PC-9 (cell line): ENCODE measurements at regions of chr12 and their contacts with region 1.

Region 1: DNA sequence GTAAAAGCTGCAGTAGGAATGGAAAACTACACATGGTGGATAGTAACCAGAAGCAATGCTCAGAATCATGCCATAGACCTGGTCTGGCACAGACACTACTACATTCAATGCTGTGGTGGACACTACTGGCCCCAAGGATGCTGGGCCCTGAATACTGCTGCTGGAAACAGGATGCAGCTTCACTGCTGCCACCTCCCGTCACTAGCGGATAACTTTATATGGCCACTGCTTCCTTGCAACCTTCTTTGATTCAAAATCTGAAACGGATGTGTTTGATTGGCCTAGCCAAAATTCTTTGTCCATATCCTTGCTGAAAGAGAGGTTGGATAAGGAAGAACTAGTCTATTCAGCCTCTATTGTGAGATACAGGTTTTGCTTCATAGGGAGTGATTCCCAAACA is 30.7 kb downstream of the ADCY6 start:
- DNase-seq: no peak
- H3K4me3 ChIP-seq: no peak overlapping the region
- H3K27ac ChIP-seq: no peak overlapping the region
- H3K4me1 ChIP-seq: no peaks in the 10 kb centered on the region; the same call in 1 of the 2 replicates
- H3K27me3 ChIP-seq: no peaks in the 10 kb centered on the region
- CTCF ChIP-seq: no peak

Region 2: GRCh38 chr12:48788854-48789796 is 30.9 kb after region 1 on chr12 and contains the start of gene ADCY6:
- CTCF ChIA-PET with region 1: interaction called, 35 read pairs
- POLR2A ChIA-PET with region 1: interaction called, 3 read pairs
- intact Hi-C with region 1: no loop called
- DNase-seq: peak; percentile 61 to 77
- H3K4me3 ChIP-seq: peak within 1 kb of the TSS; percentile 89
- H3K27ac ChIP-seq: 0 out of 2 replicates have a peak within 1 kb of the TSS, but pooled peaks have one; percentile 43
- H3K4me1 ChIP-seq: peaks cover 33% of the 10 kb centered on the region
- H3K27me3 ChIP-seq: no peaks in the 10 kb centered on the region
- CTCF ChIP-seq: no peak
- total RNA-seq, gene ADCY6: 48.3 and 61.9 TPM in 2 replicates

Region 3: GRCh38 chr12:48795480-48796455 is 37.5 kb after region 1 on chr12:
- CTCF ChIA-PET with region 1: interaction called, 35 read pairs
- POLR2A ChIA-PET with region 1: no interaction called
- intact Hi-C with region 1: loop called (anchors 1 kb)
- DNase-seq: peak; percentile 57 to 67
- H3K4me3 ChIP-seq: no peak overlapping the region
- H3K27ac ChIP-seq: peak overlapping the region; percentile 78
- H3K4me1 ChIP-seq: peaks cover 21% of the 10 kb centered on the region
- H3K27me3 ChIP-seq: no peaks in the 10 kb centered on the region
- CTCF ChIP-seq: peak; percentile 99

Region 4: GRCh38 chr12:48803675-48804074 is 45.5 kb after region 1 on chr12:
- CTCF ChIA-PET with region 1: interaction called, 13 read pairs
- POLR2A ChIA-PET with region 1: no interaction called
- intact Hi-C with region 1: no loop called
- DNase-seq: no peak
- H3K4me3 ChIP-seq: no peak overlapping the region
- H3K27ac ChIP-seq: no peak overlapping the region
- H3K4me1 ChIP-seq: no peaks in the 10 kb centered on the region
- H3K27me3 ChIP-seq: no peaks in the 10 kb centered on the region
- CTCF ChIP-seq: no peak

Region 5: DNA sequence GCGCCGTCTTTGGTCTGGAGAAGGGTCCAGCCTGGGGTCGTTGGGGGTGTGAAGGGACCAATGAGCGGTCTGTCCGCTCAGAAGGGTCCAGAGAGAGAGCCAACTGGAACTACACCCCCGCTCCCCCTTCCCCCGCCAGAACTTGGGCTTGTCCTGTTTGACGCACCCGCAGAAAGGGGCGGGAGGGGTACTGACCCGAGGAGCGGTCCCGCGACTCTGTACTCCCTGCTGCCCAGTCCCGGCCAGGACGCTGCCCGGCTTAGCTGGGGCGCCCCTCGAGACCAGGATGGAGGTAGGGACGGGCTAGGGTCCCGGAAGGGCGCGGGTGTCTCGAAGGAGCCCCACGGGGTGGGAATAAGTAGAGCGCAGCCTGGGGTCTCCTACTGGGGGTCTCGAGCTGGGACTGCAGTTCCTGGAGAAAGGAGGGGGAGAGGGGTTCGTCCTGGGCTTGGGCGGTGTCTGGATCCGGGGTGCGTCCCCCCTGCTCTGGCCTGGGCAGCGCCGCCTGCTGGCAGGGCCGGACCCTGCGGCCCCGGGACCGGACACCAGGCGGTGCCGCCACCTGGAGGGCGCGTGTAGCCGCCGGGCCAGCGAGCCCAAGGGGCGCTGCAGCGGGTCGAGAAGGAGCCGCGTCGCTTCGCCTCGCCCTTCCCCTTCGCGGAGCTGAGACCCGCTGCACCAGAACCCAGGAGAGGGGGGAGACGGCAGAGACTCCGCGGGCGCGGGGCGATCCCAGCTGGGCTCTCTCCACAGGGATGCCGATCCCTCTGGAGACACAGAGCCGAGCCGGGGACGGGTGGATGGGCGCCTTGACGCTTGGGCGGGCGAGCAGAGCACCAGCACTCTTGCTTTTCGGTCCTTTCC is 56.3 kb after region 1 on chr12:
- CTCF ChIA-PET with region 1: interaction called, 10 read pairs
- POLR2A ChIA-PET with region 1: no interaction called
- intact Hi-C with region 1: no loop called
- DNase-seq: peak; percentile 46 to 88
- H3K4me3 ChIP-seq: peak overlapping the region; percentile 72
- H3K27ac ChIP-seq: 0 out of 2 replicates have a peak overlapping the region, but pooled peaks have one; percentile 2
- H3K4me1 ChIP-seq: peaks cover 19% of the 10 kb centered on the region
- H3K27me3 ChIP-seq: no peaks in the 10 kb centered on the region
- CTCF ChIP-seq: peak; percentile 89

Region 6: GRCh38 chr12:48832321-48833060 is 74.3 kb after region 1 on chr12:
- CTCF ChIA-PET with region 1: no interaction called
- POLR2A ChIA-PET with region 1: no interaction called
- intact Hi-C with region 1: no loop called
- DNase-seq: no peak
- H3K4me3 ChIP-seq: no peak overlapping the region
- H3K27ac ChIP-seq: no peak overlapping the region
- H3K4me1 ChIP-seq: no peaks in the 10 kb centered on the region
- H3K27me3 ChIP-seq: no peaks in the 10 kb centered on the region
- CTCF ChIP-seq: no peak